Heart right ventricle (tissue), 16 donors: ENCODE measurements at regions of chr10 and their contacts with region 1.

Region 1: GRCh38 chr10:124741281-124741921 is 2.8 kb downstream of the FAM53B start:
- DNase-seq: peak; percentile 81 to 90
- ATAC-seq: peak; percentile 55 to 86 (median 76)
- H3K4me3 ChIP-seq: peak overlapping the region in 8 of 10 donors; percentile 0 to 86 (median 76)
- H3K27ac ChIP-seq: peak overlapping the region; percentile 72 to 86 (median 83)
- H3K4me1 ChIP-seq: peaks cover 48 to 79% (median 78%) of the 10 kb centered on the region in 9 donors
- H3K27me3 ChIP-seq: no peaks in the 10 kb centered on the region
- CTCF ChIP-seq: peak; percentile 73 to 92 (median 89)

Region 2: DNA sequence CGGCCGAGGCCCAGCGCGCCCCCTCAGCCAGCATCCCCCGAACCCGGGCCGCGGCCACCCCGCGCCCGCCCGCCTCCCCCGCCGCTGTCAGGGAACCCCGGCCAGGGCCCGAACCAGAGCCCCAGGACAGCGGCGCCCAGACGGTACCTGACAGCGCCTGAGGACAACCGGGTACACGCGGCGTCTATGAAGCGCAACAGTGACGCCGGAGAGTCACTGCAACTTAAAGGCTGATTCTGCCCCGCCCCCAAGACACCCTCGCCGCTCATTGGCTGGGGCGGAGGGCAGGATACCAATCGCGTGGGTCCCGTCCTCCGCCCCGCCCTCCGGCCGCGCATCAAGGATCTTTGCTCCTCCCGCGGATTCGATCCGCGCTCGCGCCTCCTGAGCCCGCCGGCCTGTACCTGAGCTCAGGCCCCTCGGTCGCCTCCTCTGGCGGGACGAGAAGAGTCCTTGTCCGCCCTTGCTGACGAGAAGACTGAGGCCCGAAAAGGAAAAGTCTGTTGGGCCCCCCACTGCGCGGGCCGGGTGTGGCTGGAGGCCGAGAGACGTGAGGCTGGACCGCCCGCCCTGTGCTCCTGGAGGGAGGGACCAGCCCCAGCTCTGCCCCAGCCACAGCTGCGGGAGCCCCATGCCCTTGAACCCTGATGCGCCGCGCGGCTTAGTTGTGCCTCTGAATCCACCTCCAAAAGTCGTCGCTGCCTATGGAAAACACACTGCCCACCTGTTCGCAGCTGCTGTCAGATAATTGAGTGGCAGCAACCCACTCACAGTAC is 322.5 kb before region 1 on chr10 and contains the start of gene OAT:
- intact Hi-C with region 1: loop called in 2 of 10 experiments (anchors 10 kb)
- DNase-seq: peak; percentile 96
- ATAC-seq: peak; percentile 97 to 99 (median 98)
- H3K4me3 ChIP-seq: peak within 1 kb of the TSS; percentile 79 to 97 (median 94)
- H3K27ac ChIP-seq: peak within 1 kb of the TSS; percentile 72 to 94 (median 90)
- H3K4me1 ChIP-seq: peaks cover 0 to 47% (median 34%) of the 10 kb centered on the region in 9 donors
- H3K27me3 ChIP-seq: peaks cover 0 to 26% (median 5%) of the 10 kb centered on the region in 7 donors
- CTCF ChIP-seq: peak in 2 of 9 donors; percentile 21 to 25
- total RNA-seq, gene OAT: 27.4 to 46.9 (median 32.0) TPM

Region 3: GRCh38 chr10:124539935-124540641 is 201.3 kb before region 1 on chr10:
- intact Hi-C with region 1: loop called in 6 of 10 experiments (anchors 1 to 5 kb)
- DNase-seq: peak; percentile 70 to 82
- ATAC-seq: peak; percentile 75 to 92 (median 88)
- H3K4me3 ChIP-seq: no peak overlapping the region
- H3K27ac ChIP-seq: no peak overlapping the region
- H3K4me1 ChIP-seq: peaks cover 0 to 25% (median 10%) of the 10 kb centered on the region in 9 donors
- H3K27me3 ChIP-seq: no peaks in the 10 kb centered on the region
- CTCF ChIP-seq: peak; percentile 76 to 95 (median 87)

Region 4: DNA sequence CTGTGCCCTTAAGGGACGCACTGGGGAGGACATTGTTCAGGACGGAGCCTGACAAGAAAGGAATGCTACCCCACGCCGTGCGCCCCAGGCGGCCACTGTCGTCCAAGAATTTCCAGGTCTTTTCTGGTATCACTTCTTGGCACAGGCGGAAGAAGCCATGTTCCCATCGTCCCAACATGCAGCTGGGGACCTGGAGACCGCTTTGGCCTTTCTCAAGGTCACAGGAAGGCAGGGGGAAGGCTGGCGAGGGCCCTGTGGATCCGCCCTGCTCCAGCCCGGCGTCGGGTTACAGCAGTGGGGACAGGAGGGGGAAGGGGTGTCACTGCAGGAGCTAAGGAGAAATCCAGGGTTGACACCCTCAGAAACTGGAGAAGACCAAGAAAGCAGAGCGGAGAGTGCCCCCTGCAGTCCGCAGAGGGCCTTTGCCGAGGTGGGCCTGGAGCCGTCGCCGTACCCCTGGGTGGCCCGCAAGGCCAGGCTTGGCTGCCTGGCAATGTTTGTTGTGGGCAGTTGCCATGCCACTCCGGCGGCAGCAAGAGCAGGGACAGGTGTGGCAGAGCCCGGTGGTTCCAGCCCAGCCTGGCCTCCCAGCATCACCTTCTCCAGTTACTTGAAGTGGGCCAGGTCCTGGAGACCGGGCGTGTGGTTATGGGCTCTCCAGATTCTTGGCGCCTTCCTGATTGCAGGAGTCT is 175.7 kb before region 1 on chr10:
- intact Hi-C with region 1: no loop called
- DNase-seq: peak in 1 of 2 donors; percentile 57
- ATAC-seq: peak in 7 of 8 donors; percentile 30 to 57 (median 39)
- H3K4me3 ChIP-seq: no peak overlapping the region
- H3K27ac ChIP-seq: peak overlapping the region in 2 of 10 donors; percentile 30 to 58
- H3K4me1 ChIP-seq: peaks cover 0 to 26% (median 16%) of the 10 kb centered on the region in 9 donors
- H3K27me3 ChIP-seq: no peaks in the 10 kb centered on the region
- CTCF ChIP-seq: peak in 8 of 9 donors; percentile 22 to 48 (median 31)

Region 5: GRCh38 chr10:124632064-124632531 is 109.3 kb before region 1 on chr10:
- intact Hi-C with region 1: loop called in 7 of 10 experiments (anchors 2 to 5 kb)
- DNase-seq: peak; percentile 48 to 71
- ATAC-seq: peak; percentile 18 to 81 (median 76)
- H3K4me3 ChIP-seq: no peak overlapping the region
- H3K27ac ChIP-seq: peak overlapping the region; percentile 31 to 74 (median 63)
- H3K4me1 ChIP-seq: peaks cover 33 to 78% (median 68%) of the 10 kb centered on the region in 9 donors
- H3K27me3 ChIP-seq: no peaks in the 10 kb centered on the region
- CTCF ChIP-seq: peak; percentile 35 to 76 (median 58)

Region 6: GRCh38 chr10:124677749-124678556 is 63.4 kb before region 1 on chr10:
- intact Hi-C with region 1: loop called in 3 of 10 experiments (anchors 2 to 10 kb)
- DNase-seq: peak in 1 of 2 donors; percentile 61
- ATAC-seq: peak; percentile 50 to 84 (median 78)
- H3K4me3 ChIP-seq: peak overlapping the region in 6 of 10 donors; percentile 14 to 31 (median 19)
- H3K27ac ChIP-seq: peak overlapping the region; percentile 72 to 94 (median 87)
- H3K4me1 ChIP-seq: peaks cover 47 to 99% (median 92%) of the 10 kb centered on the region in 9 donors
- H3K27me3 ChIP-seq: no peaks in the 10 kb centered on the region
- CTCF ChIP-seq: no peak

Region 7: GRCh38 chr10:124708922-124709520 is 32.4 kb before region 1 on chr10:
- intact Hi-C with region 1: loop called in 6 of 10 experiments (anchors 1 to 5 kb)
- DNase-seq: no peak
- ATAC-seq: no peak
- H3K4me3 ChIP-seq: no peak overlapping the region
- H3K27ac ChIP-seq: peak overlapping the region in 9 of 10 donors; percentile 44 to 98 (median 74)
- H3K4me1 ChIP-seq: peaks cover 50 to 100% (median 95%) of the 10 kb centered on the region in 9 donors
- H3K27me3 ChIP-seq: no peaks in the 10 kb centered on the region
- CTCF ChIP-seq: no peak

Region 8: DNA sequence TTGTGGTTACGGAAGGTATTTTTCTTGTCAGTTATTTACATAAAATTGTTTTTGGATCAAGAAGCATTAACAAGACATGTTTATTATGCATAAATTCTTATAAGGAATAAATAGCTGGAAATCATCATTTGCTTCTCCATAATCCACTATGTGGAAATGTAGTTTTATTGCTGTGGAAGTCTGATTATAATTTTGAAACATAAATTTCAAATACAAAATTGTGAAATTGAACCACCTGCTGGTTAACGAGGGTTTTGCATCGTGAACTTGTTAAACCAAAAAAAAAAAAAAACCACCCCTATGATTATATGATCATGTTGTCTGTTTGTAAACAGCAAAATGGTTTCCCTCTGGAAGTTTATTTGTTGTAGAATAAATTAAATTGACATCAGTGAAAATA is 86.1 kb after region 1 on chr10:
- intact Hi-C with region 1: no loop called
- DNase-seq: no peak
- ATAC-seq: no peak
- H3K4me3 ChIP-seq: no peak overlapping the region
- H3K27ac ChIP-seq: no peak overlapping the region
- H3K4me1 ChIP-seq: no peaks in the 10 kb centered on the region
- H3K27me3 ChIP-seq: no peaks in the 10 kb centered on the region
- CTCF ChIP-seq: peak; percentile 25 to 72 (median 58)